ENCODE measurements at regions of chrX and their contacts with region 1.

Region 1: GRCh38 chrX:17590892-17591740 is 146.2 kb upstream of the SCML1 start:
- DNase-seq: peak; percentile 58 to 72
- H3K4me3 ChIP-seq: no peak overlapping the region; the same call in 1 of the 2 replicates
- H3K27ac ChIP-seq: peak overlapping the region; percentile 82
- H3K4me1 ChIP-seq: peaks cover 57% of the 10 kb centered on the region
- H3K27me3 ChIP-seq: no peaks in the 10 kb centered on the region
- CTCF ChIP-seq: peak; percentile 85

Region 2: GRCh38 chrX:17242470-17242869 is 348.6 kb before region 1 on chrX:
- CTCF ChIA-PET with region 1: no interaction called
- POLR2A ChIA-PET with region 1: no interaction called
- intact Hi-C with region 1: loop called (anchors 1 kb)
- DNase-seq: peak; percentile 28 to 35
- H3K4me3 ChIP-seq: no peak overlapping the region
- H3K27ac ChIP-seq: no peak overlapping the region
- H3K4me1 ChIP-seq: no peaks in the 10 kb centered on the region
- H3K27me3 ChIP-seq: no peaks in the 10 kb centered on the region
- CTCF ChIP-seq: peak; percentile 82

Region 3: GRCh38 chrX:17521871-17522693 is 69.0 kb before region 1 on chrX:
- CTCF ChIA-PET with region 1: no interaction called
- POLR2A ChIA-PET with region 1: no interaction called
- intact Hi-C with region 1: loop called (anchors 1 kb)
- DNase-seq: peak; percentile 52 to 79
- H3K4me3 ChIP-seq: no peak overlapping the region
- H3K27ac ChIP-seq: peak overlapping the region; percentile 76
- H3K4me1 ChIP-seq: peaks cover 33% of the 10 kb centered on the region
- H3K27me3 ChIP-seq: no peaks in the 10 kb centered on the region
- CTCF ChIP-seq: no peak

Region 4: DNA sequence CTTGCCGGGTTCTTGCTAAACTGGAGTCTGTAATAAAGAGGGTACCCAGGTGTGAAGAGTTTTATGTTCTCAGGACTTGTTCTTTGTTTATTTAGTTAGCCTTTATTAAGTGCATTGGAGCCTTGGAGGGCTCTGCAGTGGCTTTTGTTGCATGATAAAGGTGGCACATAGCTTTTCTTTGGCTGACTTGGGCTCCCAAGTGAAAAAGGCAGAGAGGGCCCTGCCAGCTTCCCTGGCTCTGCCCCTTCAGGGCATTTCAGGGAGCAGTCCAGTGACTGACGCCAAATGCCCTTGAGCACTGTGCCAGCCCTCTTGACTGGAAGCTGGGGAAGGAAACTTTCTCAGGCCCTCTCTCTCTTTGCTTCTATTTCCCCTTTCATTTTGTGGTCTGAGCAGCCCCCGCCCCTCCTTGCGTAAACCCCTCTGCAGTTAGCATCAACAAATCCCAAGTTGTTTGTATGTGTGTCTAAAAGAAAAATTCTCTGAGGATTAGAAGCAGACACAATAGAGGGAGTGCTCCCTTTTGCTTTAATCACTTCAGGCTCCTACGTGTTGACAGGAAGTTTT is 63.9 kb before region 1 on chrX:
- CTCF ChIA-PET with region 1: no interaction called
- POLR2A ChIA-PET with region 1: no interaction called
- intact Hi-C with region 1: loop called (anchors 1 kb)
- DNase-seq: peak; percentile 67 to 85
- H3K4me3 ChIP-seq: no peak overlapping the region; the same call in 1 of the 2 replicates
- H3K27ac ChIP-seq: peak overlapping the region; percentile 88
- H3K4me1 ChIP-seq: peaks cover 46% of the 10 kb centered on the region
- H3K27me3 ChIP-seq: no peaks in the 10 kb centered on the region
- CTCF ChIP-seq: no peak

Region 5: DNA sequence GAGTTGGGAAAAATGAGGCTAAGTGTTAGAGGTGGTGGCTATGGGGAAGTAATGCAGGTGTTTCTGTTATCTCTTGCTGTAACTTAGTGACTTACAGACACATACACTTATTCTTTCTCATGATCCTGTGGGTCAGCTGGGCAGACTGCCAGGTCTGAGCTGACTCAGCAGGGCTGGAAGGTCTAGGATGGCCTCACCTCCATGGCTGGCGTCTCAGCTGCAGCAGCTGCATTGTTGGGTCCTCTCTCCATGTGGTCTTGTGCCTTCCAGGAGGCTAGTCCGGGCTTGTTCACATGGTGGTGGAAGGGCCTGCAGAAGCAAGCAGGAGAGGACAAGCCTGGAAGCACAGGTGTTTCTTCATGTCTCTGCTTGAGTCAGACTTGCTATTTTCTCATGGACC is 43.5 kb before region 1 on chrX:
- CTCF ChIA-PET with region 1: no interaction called
- POLR2A ChIA-PET with region 1: no interaction called
- intact Hi-C with region 1: no loop called
- DNase-seq: peak; percentile 82 to 88
- H3K4me3 ChIP-seq: no peak overlapping the region
- H3K27ac ChIP-seq: peak overlapping the region; percentile 61
- H3K4me1 ChIP-seq: peaks cover 23% of the 10 kb centered on the region
- H3K27me3 ChIP-seq: no peaks in the 10 kb centered on the region
- CTCF ChIP-seq: no peak

Region 6: GRCh38 chrX:17710871-17711301 is 119.8 kb after region 1 on chrX:
- CTCF ChIA-PET with region 1: no interaction called
- POLR2A ChIA-PET with region 1: no interaction called
- intact Hi-C with region 1: no loop called
- DNase-seq: no peak
- H3K4me3 ChIP-seq: no peak overlapping the region
- H3K27ac ChIP-seq: no peak overlapping the region
- H3K4me1 ChIP-seq: peaks cover 20% of the 10 kb centered on the region
- H3K27me3 ChIP-seq: no peaks in the 10 kb centered on the region
- CTCF ChIP-seq: no peak